ENCODE measurements at regions of chr19 and their contacts with region 1.

Region 1: DNA sequence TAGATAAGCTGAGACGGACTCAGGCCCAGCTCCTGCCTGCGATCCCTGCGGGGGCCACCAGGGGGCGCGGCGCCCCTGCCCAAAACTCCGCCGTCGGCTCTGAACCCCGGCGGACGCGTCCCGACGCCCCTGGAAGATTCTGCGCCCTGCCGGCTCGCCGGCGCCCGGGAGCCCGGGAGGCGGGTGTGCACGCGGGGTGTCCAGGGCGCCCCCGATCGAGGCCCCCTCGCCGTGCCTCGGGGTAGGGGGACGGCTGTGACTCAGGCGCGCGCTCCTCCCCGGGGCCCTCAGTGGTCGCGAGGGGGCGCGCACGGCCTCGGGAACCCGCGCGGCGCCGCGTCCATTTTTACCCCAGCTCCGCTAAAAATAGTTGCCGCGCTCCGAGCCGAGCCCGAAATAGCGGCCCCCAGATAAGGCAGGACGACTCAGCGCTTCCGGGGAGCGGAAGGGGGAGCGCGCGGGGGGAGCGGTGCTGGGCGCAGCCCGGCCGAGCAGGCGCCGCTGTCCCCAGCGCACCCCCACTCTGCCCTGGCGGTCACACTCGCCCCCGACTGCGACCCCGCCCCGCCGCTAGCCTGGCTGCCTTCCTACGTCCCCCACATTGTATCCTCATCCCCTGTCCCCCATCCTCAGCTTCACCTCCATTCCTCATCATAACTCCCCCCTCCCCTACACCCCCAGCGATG is 16.0 kb upstream of the ERCC1 start:
- DNase-seq: peak; percentile 89
- CTCF ChIP-seq: peak; percentile 83

Region 2: DNA sequence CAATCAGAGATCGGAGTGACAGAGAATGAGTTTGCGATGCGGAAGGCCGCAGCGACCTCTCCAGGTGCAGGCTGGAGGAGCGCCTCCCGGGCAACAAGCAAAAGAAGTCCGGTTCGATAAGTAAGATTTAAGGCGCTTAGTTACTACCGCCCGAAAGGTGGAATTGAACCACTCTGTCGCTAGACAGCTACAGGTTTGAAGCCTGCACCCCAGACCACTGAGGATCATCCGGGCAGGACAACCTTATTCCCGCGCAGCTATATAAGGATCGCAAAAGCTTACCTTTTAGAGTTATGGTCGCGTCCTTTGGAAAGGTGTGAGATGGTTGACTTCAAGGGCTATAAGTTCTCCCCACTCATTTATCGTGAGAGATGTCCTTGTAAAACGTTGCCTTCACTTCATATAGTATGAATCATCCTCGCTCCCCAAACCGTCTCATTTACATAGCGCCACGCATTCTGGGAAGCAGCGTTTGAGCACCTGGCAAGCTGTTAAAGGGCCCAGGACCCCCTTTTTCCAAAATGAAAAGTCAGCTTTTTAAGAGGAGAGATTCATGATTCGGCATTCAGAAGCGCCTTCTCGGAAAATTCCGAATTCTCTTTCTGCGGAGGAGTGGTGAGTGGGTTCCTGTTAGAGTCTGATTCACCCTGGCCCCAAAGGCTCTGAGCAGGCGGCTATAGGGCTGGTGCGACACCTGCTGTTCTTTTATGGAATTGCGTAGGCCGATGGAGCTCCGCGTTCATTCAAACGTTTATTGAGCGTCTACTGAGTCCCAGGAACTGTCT is 38.9 kb after region 1 on chr19:
- in situ Hi-C with region 1: loop called (anchors 5 kb)
- DNase-seq: peak; percentile 83
- CTCF ChIP-seq: peak; percentile 85

Region 3: DNA sequence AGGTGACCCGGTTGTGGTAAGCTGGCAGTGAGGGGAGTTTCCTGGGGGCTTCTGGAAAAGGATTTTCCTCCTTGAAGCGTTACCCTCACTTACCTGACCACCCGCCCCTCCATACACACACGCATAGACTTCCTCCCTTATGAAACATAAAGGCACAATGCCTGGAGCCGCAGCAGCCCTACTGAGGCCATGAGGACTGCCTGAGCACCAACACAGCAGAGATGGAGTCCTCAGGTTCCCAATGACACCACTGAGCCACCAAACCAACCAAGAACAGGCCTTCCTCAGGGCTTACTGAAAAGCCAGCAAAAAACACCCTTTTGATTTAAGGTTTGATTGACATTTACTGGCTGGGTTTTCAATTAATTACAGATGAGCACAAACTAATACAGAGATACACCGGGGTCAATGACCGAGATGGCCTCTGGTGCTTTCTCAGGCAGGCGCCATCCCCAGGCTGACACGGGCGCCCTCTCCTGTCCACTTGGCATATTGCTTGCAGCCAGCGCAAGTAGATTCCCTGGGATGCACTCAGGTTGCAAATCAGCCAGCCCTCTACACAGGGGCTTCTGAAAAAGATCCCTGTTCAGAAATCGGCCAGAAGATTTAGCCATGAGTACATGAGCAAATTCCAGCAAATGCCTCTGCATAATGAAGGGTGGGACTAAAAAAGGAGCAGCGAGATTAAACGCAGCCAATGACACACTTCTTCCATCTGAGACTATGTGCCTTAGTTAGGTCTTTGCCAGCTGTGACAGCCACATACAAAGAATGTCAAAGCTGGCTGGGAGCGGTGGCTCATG is 130.1 kb after region 1 on chr19:
- in situ Hi-C with region 1: loop called (anchors 10 kb)
- DNase-seq: peak; percentile 73
- CTCF ChIP-seq: peak; percentile 88

Measured in GM13976 (cell line).